ENCODE measurements at regions of chr1 and their contacts with region 1.

Region 1: GRCh38 chr1:176691251-176692228 is 228.6 kb downstream of the PAPPA2 start:
- DNase-seq: no peak
- H3K4me3 Mint-ChIP-seq: no peak overlapping the region
- H3K27ac Mint-ChIP-seq: no peak overlapping the region
- H3K4me1 Mint-ChIP-seq: no peaks in the 10 kb centered on the region
- H3K27me3 Mint-ChIP-seq: no peaks in the 10 kb centered on the region

Region 2: DNA sequence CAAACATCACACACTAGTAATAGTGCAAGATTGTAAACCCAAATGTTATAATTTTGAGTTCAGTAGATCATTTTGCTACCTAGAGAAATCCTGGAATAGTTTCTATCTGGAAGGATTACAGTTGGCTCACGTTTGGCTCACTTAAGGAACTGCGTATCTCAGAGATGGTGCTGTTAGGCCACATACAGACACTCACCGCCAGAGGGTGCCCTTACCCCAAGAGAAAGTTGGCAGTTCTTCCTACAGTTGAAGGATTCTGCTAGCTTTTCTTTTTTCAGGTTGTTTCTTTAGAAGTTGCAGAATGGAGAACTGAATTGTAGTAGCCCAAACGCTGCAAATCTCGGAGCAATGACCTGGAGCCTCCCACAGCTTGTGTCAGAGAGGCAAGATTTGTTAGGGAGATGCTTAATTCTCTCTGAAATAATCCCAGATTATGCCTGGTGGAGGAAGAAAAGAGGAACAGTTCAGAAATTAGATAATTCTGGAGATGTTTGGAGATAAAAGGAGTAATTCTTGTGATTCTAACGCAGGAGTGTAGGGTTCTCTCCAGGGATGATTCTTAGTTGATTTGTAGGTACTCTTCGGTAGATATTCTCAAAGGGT is 316.5 kb before region 1 on chr1:
- CTCF ChIA-PET with region 1: interaction called, 12 read pairs
- POLR2A ChIA-PET with region 1: no interaction called
- intact Hi-C with region 1: no loop called
- DNase-seq: peak; percentile 77
- H3K4me3 Mint-ChIP-seq: no peak overlapping the region
- H3K27ac Mint-ChIP-seq: no peak overlapping the region
- H3K4me1 Mint-ChIP-seq: no peaks in the 10 kb centered on the region
- H3K27me3 Mint-ChIP-seq: peaks cover 1% of the 10 kb centered on the region

Region 3: DNA sequence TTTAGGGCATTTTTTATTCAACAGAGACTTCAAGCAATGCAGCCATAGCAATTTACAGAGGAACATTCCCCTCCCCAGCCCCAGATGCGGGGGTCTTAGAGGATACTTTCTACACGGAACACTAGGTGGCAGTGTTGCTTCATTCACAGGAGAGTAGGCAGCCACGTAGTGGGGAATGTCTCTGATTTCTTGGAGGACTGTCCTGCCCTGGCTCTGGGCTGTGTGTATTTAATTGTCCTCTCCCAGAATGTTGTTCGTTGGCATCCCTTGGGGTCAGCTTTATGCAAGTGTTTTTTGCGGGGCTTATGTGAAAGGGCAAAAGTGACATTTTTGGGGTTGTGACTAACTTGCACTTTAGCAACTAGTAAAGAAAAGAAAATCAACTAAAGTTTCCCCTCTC is 131.7 kb before region 1 on chr1:
- CTCF ChIA-PET with region 1: interaction called, 9 read pairs
- POLR2A ChIA-PET with region 1: no interaction called
- intact Hi-C with region 1: loop called (anchors 1 kb)
- DNase-seq: peak; percentile 23
- H3K4me3 Mint-ChIP-seq: no peak overlapping the region
- H3K27ac Mint-ChIP-seq: no peak overlapping the region
- H3K4me1 Mint-ChIP-seq: no peaks in the 10 kb centered on the region
- H3K27me3 Mint-ChIP-seq: peaks cover 2% of the 10 kb centered on the region